SK-N-SH (cell line): ENCODE measurements at regions of chr1 and their contacts with region 1.

Region 1: DNA sequence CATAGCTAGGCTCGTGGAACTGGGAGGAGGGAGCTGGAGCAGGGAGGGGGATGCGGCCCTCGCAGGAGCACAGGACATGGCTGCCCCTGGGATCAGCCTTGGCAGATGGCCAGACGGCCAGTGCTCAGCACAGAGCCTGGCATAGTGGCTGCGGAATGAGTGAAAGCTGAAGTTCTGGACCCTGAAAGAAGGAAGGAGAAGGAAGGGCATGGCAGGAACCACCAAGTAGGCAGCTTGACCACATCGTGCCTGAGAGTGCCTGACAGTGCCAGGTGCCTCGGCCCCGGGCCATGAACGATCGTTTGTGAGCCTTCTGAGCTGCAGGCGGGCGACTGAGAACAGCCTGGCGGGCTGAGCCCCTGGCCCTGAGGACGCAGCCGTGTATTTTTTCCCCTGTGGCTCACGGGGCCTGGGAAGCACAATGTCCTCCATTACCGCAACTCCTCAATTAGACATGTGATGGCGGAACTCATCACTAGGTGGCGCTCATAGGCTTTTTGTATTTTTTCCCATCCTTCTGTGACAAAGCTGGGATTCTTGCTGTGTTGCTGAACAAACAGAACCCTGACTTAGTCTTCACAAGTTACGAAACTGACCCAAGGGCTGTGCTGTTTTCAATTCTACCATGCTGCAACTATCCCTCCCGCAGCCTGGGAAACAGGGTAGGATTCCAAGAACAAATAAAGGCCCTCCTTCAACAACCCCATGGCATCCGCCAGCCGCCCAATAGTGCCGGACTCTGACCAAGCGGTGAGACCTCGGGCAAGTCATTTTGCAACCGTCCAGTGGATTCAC is 29.9 kb upstream of the TMEM61 start:
- DNase-seq: peak; percentile 76
- H3K4me3 ChIP-seq: no peak overlapping the region; a peak in 2 of 4 replicates
- H3K27ac ChIP-seq: peak overlapping the region in 1 of 2 experiments; percentile 54; a peak in 2 of 4 replicates
- H3K4me1 ChIP-seq: peaks cover 7 to 9% of the 10 kb centered on the region in 2 experiments; a peak in 2 of 4 replicates
- H3K27me3 ChIP-seq: no peaks in the 10 kb centered on the region
- CTCF ChIP-seq: peak; percentile 81
- EP300 ChIP-seq: no peak
- RAD21 ChIP-seq: peak; percentile 85

Region 2: GRCh38 chr1:54742282-54742681 is 208.3 kb before region 1 on chr1:
- CTCF ChIA-PET with region 1: no interaction called
- POLR2A ChIA-PET with region 1: no interaction called
- DNase-seq: no peak
- H3K4me3 ChIP-seq: no peak overlapping the region
- H3K27ac ChIP-seq: no peak overlapping the region
- H3K4me1 ChIP-seq: no peaks in the 10 kb centered on the region; a peak in 1 of 4 replicates
- H3K27me3 ChIP-seq: no peaks in the 10 kb centered on the region
- CTCF ChIP-seq: no peak
- EP300 ChIP-seq: no peak
- RAD21 ChIP-seq: no peak

Region 3: DNA sequence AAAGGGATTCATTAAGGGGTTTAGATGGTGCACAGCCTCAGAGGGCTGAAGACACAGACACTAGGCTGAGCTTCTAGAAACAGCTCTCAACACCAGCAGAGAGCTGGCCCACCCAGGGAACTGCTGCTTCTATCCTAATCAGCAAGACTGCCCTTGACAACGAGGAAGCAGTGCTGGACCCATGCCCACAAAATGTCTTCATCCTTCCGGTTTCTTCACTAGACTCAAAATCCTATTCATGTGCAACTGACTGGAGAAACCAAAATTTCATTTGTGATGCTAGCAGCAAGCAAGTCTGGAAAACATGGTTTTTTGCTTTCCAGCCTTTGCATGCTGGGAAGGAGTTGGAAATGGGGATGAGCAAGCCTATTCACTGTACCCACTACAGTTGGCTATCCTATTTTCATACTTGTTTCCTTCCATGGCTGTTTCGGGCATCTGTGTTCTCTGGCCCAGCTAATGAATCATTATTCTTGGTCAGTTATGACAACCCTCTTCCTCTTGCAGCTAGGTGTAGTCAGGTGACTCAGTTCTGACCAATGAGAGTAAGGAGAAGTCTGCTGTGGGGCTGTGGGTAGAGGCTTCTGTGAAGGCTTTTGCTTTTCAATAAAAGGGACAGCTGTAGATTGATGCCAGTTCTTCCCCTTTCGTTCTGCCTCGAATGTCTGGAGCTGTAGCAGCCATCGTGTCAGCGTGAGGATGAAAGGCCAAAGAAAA is 15.2 kb after region 1 on chr1:
- CTCF ChIA-PET with region 1: interaction called, 68 read pairs
- POLR2A ChIA-PET with region 1: no interaction called
- DNase-seq: no peak
- H3K4me3 ChIP-seq: no peak overlapping the region
- H3K27ac ChIP-seq: no peak overlapping the region
- H3K4me1 ChIP-seq: peaks cover 0 to 14% of the 10 kb centered on the region in 2 experiments; a peak in 1 of 4 replicates
- H3K27me3 ChIP-seq: no peaks in the 10 kb centered on the region
- CTCF ChIP-seq: no peak
- EP300 ChIP-seq: no peak
- RAD21 ChIP-seq: no peak

Region 4: GRCh38 chr1:54980528-54981241 is 30.1 kb after region 1 on chr1 and contains the start of gene TMEM61:
- CTCF ChIA-PET with region 1: interaction called, 123 read pairs
- POLR2A ChIA-PET with region 1: no interaction called
- DNase-seq: peak; percentile 73
- H3K4me3 ChIP-seq: peak within 1 kb of the TSS in 1 of 2 experiments; percentile 40; a peak in 2 of 4 replicates
- H3K27ac ChIP-seq: no peak within 1 kb of the TSS
- H3K4me1 ChIP-seq: no peaks in the 10 kb centered on the region; a peak in 1 of 4 replicates
- H3K27me3 ChIP-seq: no peaks in the 10 kb centered on the region; the same call in 1 of the 2 replicates
- CTCF ChIP-seq: no peak
- EP300 ChIP-seq: no peak
- RAD21 ChIP-seq: no peak
- polyA plus RNA-seq, gene TMEM61: not detected in 2 replicates

Region 5: DNA sequence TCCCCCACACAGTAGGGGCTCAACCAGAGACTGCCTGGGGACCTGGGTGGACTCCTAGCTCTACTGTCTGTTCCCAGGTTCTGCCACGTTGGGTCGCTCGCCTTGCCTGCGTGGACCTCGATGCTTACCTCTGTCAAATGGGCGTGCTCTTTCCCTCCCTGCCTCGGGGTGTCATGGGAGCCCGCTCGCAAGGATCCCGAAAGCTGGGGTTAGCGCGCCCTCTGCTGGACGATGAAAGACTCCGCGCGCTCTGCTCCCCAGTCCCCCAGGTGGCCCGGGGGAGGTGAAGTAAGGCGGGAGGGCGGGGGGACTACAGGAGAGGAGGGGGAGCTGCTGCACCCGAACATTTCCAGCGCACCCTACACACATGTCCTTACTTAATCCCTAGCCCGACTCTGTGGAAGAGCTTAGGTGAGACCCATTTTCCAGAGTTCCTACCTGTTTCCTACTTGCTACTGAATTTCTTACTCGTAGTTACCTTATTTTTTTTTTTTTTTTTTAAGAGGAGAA is 45.8 kb after region 1 on chr1:
- CTCF ChIA-PET with region 1: interaction called, 302 read pairs
- POLR2A ChIA-PET with region 1: interaction called, 3 read pairs
- DNase-seq: peak; percentile 96
- H3K4me3 ChIP-seq: peak overlapping the region in 1 of 2 experiments; percentile 49; a peak in 1 of 4 replicates
- H3K27ac ChIP-seq: no peak overlapping the region
- H3K4me1 ChIP-seq: peaks cover 0 to 3% of the 10 kb centered on the region in 2 experiments; a peak in 1 of 4 replicates
- H3K27me3 ChIP-seq: no peaks in the 10 kb centered on the region; the same call in 1 of the 2 replicates
- CTCF ChIP-seq: peak; percentile 87
- EP300 ChIP-seq: no peak
- RAD21 ChIP-seq: peak; percentile 86

Region 6: DNA sequence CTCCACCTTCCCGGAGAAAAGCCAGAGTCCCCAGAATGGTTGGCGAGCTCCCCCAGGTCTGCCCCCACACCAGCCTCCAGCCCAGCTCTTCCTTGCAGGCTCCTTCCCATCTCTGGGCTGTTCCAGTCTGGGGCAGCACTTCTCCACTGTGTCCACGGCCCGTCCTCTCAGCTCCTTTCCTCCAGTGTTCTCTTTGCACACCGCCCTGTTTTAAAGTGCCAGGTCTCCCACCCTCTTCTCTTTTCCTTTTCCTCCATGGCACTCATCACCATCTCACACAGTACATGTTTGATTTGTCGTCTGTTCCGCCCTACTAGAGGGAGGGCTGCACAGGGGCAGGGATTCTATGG is 82.7 kb after region 1 on chr1:
- CTCF ChIA-PET with region 1: interaction called, 16 read pairs
- POLR2A ChIA-PET with region 1: no interaction called
- DNase-seq: no peak
- H3K4me3 ChIP-seq: no peak overlapping the region
- H3K27ac ChIP-seq: no peak overlapping the region
- H3K4me1 ChIP-seq: no peaks in the 10 kb centered on the region
- H3K27me3 ChIP-seq: peaks cover 30% of the 10 kb centered on the region
- CTCF ChIP-seq: no peak
- EP300 ChIP-seq: no peak
- RAD21 ChIP-seq: no peak